ENCODE measurements at regions of chr2 and their contacts with region 1.

Region 1: DNA sequence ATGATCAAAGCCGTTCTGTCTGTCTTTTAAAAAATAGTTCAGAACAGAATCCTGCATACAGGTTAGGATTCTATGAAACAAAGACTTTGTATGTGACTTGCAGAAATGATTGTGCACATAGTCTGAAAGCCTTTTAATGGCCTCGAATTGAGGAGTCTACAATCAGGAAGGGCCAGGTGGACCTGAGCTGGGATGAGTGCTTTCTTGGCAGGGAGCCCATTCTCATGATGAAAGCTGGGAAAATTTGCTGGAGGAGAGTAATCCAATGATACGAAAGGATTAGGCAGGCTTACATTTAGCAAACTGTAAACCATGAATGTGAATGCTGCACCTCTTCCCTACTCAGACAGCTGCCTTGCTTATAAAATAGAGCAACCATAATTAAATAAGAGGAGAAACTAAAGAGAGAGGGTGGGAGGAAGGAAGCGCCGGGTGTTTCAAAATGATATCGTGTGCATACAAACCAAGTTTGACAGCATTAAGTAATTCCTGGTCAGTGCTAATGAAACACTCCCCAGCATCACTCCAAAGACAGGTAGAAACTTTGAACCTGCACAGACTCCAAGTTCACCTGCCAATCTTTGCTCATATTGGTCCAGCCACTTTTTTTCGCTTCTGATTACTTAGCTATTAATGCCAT is 23.7 kb upstream of the CXCR4 start:
- DNase-seq: no peak
- ATAC-seq: no peak
- H3K4me3 ChIP-seq: no peak overlapping the region
- H3K27ac ChIP-seq: no peak overlapping the region
- H3K4me1 ChIP-seq: peaks cover 7% of the 10 kb centered on the region
- H3K27me3 ChIP-seq: peaks cover 2 to 23% of the 10 kb centered on the region in 2 experiments; a peak in 2 of 4 replicates
- CTCF ChIP-seq: no peak
- EP300 ChIP-seq: no peak
- POLR2A ChIP-seq: no peak
- RAD21 ChIP-seq: no peak

Region 2: DNA sequence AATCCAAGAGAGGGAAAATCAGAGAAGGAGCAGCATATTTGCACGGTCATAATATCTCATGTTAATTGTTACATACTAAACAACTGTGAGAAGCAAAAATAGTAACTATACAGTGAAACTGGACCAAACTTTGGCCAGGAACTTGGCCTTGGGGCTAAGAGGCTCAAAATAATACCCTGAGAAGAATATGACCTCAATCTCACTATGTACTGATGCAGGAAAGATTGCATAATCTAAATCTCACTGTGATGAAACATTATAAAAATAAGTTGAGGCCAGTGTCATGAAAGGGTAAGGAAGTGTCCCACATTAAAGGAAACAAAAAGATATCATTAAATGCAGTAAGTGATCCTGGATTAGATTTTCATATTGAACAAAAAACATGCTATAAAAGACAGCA is 647.1 kb before region 1 on chr2:
- CTCF ChIA-PET with region 1: no interaction called
- POLR2A ChIA-PET with region 1: no interaction called
- RAD21 ChIA-PET with region 1: no interaction called
- SMC1A ChIA-PET with region 1: no interaction called
- in situ Hi-C with region 1: no loop called
- intact Hi-C with region 1: no loop called
- DNase-seq: no peak
- ATAC-seq: no peak
- H3K4me3 ChIP-seq: no peak overlapping the region
- H3K27ac ChIP-seq: no peak overlapping the region
- H3K4me1 ChIP-seq: no peaks in the 10 kb centered on the region
- H3K27me3 ChIP-seq: no peaks in the 10 kb centered on the region
- CTCF ChIP-seq: no peak
- EP300 ChIP-seq: no peak
- POLR2A ChIP-seq: no peak
- RAD21 ChIP-seq: no peak

Region 3: DNA sequence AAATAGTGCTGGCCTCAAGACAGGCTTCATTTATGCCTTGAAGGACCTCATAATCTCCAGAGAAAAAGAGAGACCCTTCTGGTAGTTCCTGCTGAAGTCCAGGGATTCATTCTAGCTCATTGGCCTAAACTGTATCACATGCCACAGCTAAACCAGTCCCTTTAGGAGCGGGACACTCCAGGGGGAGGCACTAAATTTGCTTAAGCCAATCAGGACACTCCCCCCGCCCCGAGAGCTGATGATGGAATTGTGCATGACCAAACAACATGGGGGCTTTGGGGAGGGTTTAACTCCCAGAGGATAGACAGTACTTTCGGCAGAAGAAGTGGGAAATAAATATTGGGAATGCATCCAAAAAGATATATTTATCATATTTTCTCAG is 12.8 kb after region 1 on chr2:
- CTCF ChIA-PET with region 1: interaction called, 12 read pairs
- POLR2A ChIA-PET with region 1: interaction called, 7 read pairs
- RAD21 ChIA-PET with region 1: interaction called, 3 read pairs
- SMC1A ChIA-PET with region 1: interaction called, 35 read pairs
- in situ Hi-C with region 1: no loop called
- intact Hi-C with region 1: no loop called
- DNase-seq: no peak
- ATAC-seq: no peak
- H3K4me3 ChIP-seq: no peak overlapping the region
- H3K27ac ChIP-seq: no peak overlapping the region
- H3K4me1 ChIP-seq: no peaks in the 10 kb centered on the region
- H3K27me3 ChIP-seq: peaks cover 0 to 2% of the 10 kb centered on the region in 2 experiments; a peak in 3 of 4 replicates
- CTCF ChIP-seq: no peak
- EP300 ChIP-seq: no peak
- POLR2A ChIP-seq: no peak
- RAD21 ChIP-seq: no peak

Region 4: GRCh38 chr2:136178941-136179601 is 37.4 kb after region 1 on chr2:
- CTCF ChIA-PET with region 1: interaction called, 5 read pairs
- POLR2A ChIA-PET with region 1: interaction called, 3 read pairs
- RAD21 ChIA-PET with region 1: no interaction called
- SMC1A ChIA-PET with region 1: interaction called, 10 read pairs
- in situ Hi-C with region 1: no loop called
- intact Hi-C with region 1: no loop called
- DNase-seq: no peak
- ATAC-seq: no peak
- H3K4me3 ChIP-seq: no peak overlapping the region
- H3K27ac ChIP-seq: no peak overlapping the region
- H3K4me1 ChIP-seq: no peaks in the 10 kb centered on the region
- H3K27me3 ChIP-seq: no peaks in the 10 kb centered on the region
- CTCF ChIP-seq: no peak
- EP300 ChIP-seq: no peak
- POLR2A ChIP-seq: no peak
- RAD21 ChIP-seq: no peak

Measured in GM12878 (cell line).